IMR-90 (cell line): ENCODE measurements at regions of chr5 and their contacts with region 1.

Region 1: GRCh38 chr5:159581502-159582249 is 251.4 kb upstream of the IL12B start:
- DNase-seq: peak; percentile 45
- ATAC-seq: peak; percentile 53
- H3K4me3 ChIP-seq: no peak overlapping the region
- H3K27ac ChIP-seq: no peak overlapping the region
- H3K4me1 ChIP-seq: peaks cover 5% of the 10 kb centered on the region
- H3K27me3 ChIP-seq: peaks cover 4% of the 10 kb centered on the region
- CTCF ChIP-seq: 0 out of 2 replicates have a peak, but pooled peaks have one; percentile 22
- POLR2A ChIP-seq: no peak
- RAD21 ChIP-seq: no peak

Region 2: DNA sequence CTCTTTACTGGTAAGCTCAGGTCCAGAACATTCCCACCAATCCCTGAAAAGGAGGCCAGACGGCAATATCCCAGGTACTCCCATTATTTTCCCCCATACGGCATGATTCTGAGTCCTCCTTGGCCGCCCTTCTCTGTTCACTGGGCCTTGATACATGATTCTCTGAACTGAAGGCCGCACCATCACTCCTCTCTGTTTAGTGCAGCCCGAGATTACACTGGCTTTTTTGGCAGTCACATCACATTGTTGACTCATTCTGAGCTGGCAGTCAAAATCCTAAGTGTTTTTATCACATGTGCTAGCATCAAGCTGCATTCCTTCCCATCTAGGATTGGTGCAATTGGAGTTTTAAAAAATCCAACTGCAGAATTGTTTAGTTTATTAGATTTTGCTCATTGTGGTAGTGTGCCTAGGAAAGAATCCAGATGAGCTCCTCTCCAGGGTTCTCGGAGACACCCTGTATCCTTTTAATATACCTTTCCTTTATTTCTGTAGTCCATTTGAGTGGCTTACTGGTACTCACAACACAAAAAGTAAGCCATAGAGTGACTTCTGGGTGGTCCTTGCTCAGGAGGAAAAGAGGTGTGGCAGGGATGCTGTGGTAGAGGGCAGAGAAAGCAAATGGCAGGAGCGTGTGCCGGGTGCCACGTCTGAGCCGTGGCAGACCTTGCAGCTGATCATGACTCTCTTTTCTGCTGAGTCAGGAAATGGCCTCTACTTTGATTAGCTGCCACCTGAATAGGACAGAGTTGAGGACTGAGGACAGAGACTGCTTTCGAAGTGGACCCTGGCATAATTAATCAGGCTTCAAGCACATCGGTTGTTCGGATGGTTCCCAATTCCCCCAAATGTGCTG is 130.3 kb before region 1 on chr5:
- CTCF ChIA-PET with region 1: no interaction called
- POLR2A ChIA-PET with region 1: no interaction called
- dilution Hi-C with region 1: no loop called
- in situ Hi-C with region 1: no loop called
- intact Hi-C with region 1: loop called (anchors 5 kb)
- DNase-seq: peak; percentile 98
- ATAC-seq: peak; percentile 94
- H3K4me3 ChIP-seq: no peak overlapping the region
- H3K27ac ChIP-seq: peak overlapping the region; percentile 71
- H3K4me1 ChIP-seq: peaks cover 16% of the 10 kb centered on the region
- H3K27me3 ChIP-seq: no peaks in the 10 kb centered on the region
- CTCF ChIP-seq: 0 out of 2 replicates have a peak, but pooled peaks have one; percentile 1
- POLR2A ChIP-seq: no peak
- RAD21 ChIP-seq: peak; percentile 29; the same call in 1 of the 2 replicates